ENCODE measurements at regions of chr11 and their contacts with region 1.

Region 1: GRCh38 chr11:46529095-46529905 is 64.5 kb downstream of the AMBRA1 start:
- DNase-seq: peak; percentile 63
- H3K4me3 ChIP-seq: no peak overlapping the region
- H3K27ac ChIP-seq: no peak overlapping the region
- H3K4me1 ChIP-seq: no peaks in the 10 kb centered on the region
- H3K27me3 ChIP-seq: no peaks in the 10 kb centered on the region
- CTCF ChIP-seq: peak; percentile 90 to 95
- POLR2A ChIP-seq: no peak

Region 2: DNA sequence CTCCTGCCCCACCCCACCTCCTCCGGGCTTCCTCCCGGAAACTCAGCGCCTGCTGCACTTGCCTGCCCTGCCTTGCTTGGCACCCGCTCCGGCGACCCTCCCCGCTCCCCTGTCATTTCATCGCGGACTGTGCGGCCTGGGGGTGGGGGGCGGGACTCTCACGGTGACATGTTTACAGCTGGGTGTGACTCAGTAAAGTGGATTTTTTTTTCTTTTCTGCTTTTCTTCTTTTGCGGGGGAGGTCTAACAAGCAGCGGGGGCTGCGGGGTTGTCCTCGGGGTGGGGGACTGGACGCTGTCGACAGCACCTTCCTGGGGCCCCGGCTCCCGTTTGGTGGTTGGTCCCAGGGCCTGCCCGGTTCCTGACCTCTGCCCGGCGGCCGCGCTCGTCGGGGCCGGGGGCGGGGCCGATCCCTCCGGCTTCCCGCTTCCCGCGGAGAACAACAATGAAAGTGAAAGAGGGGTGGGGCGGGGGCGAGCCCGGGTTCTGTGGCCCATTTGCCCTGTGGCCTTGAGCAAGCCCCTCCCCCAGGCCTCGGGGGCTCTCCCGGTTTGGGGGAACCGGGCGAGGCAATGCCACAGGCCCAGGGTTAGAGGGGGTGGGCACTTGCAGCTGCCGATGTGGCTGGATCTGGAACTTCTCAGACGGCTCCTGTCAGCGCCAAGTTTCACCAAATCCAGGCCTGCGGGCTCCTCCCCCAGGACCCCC is 148.8 kb before region 1 on chr11:
- CTCF ChIA-PET with region 1: interaction called, 15 read pairs
- POLR2A ChIA-PET with region 1: no interaction called
- dilution Hi-C with region 1: no loop called
- intact Hi-C with region 1: no loop called
- DNase-seq: peak; percentile 67
- H3K4me3 ChIP-seq: peak overlapping the region; percentile 62 to 84 (median 72)
- H3K27ac ChIP-seq: peak overlapping the region; percentile 61
- H3K4me1 ChIP-seq: peaks cover 11% of the 10 kb centered on the region
- H3K27me3 ChIP-seq: no peaks in the 10 kb centered on the region
- CTCF ChIP-seq: no peak
- POLR2A ChIP-seq: no peak

Region 3: DNA sequence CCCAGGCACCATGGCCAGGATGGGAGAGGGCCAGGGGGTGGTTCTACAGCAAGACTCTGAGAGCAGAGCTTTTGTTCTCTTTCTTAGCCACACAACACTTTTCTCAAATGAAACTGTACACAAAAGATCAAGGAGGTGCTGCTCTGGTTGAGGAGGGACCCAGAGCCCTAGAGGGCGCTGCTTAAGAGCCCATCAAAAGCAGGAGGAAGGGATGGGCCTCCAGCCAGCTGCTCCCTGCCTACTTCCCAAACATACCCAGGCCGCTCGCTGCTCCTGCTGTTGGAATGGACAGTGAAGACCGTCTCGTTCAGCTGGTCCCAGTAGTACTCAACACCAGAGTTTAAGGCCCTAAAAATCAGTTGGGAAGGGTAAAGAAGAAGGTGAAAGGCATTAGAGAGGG is 119.3 kb before region 1 on chr11:
- CTCF ChIA-PET with region 1: interaction called, 11 read pairs
- POLR2A ChIA-PET with region 1: no interaction called
- dilution Hi-C with region 1: no loop called
- intact Hi-C with region 1: no loop called
- DNase-seq: no peak
- H3K4me3 ChIP-seq: no peak overlapping the region
- H3K27ac ChIP-seq: no peak overlapping the region
- H3K4me1 ChIP-seq: no peaks in the 10 kb centered on the region
- H3K27me3 ChIP-seq: no peaks in the 10 kb centered on the region
- CTCF ChIP-seq: peak in 1 of 2 donors; percentile 8
- POLR2A ChIP-seq: no peak

Region 4: DNA sequence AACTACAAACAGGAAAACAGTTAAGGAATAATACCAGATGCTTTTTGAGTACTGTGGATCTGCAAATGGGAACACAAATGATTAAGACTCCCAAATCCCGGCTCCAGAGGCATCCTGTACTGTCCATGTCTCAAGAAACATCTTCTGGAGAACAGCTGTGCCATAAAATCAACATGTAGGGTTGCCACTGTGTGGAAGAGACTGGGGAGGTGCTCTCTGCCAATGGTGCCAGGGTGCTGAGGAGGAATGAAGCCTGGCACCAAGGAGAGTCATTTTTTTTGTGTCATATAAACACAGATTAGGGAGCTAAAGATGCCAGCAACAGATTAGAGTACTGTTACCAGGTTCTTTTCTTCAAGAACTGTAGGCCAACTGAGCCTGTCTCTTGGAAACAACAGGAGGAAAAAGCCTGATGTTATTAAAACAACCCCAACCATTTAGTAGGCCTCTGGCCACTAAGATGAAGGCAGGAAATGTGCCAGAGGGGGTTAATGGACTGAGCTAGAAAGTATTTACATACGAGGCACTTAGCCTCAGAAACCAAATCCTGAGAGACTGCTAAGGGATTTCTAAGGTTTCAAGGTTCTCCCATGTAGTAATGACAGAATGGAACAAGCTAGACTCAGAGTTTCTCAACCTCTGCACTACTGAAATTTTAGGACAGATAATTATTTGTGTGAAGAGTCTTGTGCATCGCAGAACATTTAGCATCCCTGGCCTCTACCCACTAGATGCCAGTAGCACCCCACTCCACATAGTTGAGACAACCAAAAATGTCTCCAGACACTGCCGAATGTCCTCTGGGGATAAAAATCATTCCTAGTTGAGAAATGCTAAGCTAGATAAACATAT is 83.2 kb before region 1 on chr11:
- CTCF ChIA-PET with region 1: interaction called, 10 read pairs
- POLR2A ChIA-PET with region 1: no interaction called
- dilution Hi-C with region 1: no loop called
- intact Hi-C with region 1: no loop called
- DNase-seq: peak; percentile 37
- H3K4me3 ChIP-seq: no peak overlapping the region
- H3K27ac ChIP-seq: no peak overlapping the region
- H3K4me1 ChIP-seq: no peaks in the 10 kb centered on the region
- H3K27me3 ChIP-seq: no peaks in the 10 kb centered on the region
- CTCF ChIP-seq: no peak
- POLR2A ChIP-seq: no peak

Region 5: GRCh38 chr11:46489661-46490560 is 39.4 kb before region 1 on chr11:
- CTCF ChIA-PET with region 1: interaction called, 171 read pairs
- POLR2A ChIA-PET with region 1: no interaction called
- dilution Hi-C with region 1: no loop called
- intact Hi-C with region 1: loop called (anchors 1 kb)
- DNase-seq: peak; percentile 62
- H3K4me3 ChIP-seq: no peak overlapping the region
- H3K27ac ChIP-seq: no peak overlapping the region
- H3K4me1 ChIP-seq: peaks cover 27% of the 10 kb centered on the region
- H3K27me3 ChIP-seq: no peaks in the 10 kb centered on the region
- CTCF ChIP-seq: peak; percentile 66 to 68
- POLR2A ChIP-seq: no peak

Region 6: GRCh38 chr11:46504817-46505613 is 24.3 kb before region 1 on chr11:
- CTCF ChIA-PET with region 1: interaction called, 24 read pairs
- POLR2A ChIA-PET with region 1: no interaction called
- dilution Hi-C with region 1: no loop called
- intact Hi-C with region 1: no loop called
- DNase-seq: peak; percentile 29
- H3K4me3 ChIP-seq: no peak overlapping the region
- H3K27ac ChIP-seq: no peak overlapping the region
- H3K4me1 ChIP-seq: no peaks in the 10 kb centered on the region
- H3K27me3 ChIP-seq: no peaks in the 10 kb centered on the region
- CTCF ChIP-seq: no peak
- POLR2A ChIP-seq: no peak

Region 7: DNA sequence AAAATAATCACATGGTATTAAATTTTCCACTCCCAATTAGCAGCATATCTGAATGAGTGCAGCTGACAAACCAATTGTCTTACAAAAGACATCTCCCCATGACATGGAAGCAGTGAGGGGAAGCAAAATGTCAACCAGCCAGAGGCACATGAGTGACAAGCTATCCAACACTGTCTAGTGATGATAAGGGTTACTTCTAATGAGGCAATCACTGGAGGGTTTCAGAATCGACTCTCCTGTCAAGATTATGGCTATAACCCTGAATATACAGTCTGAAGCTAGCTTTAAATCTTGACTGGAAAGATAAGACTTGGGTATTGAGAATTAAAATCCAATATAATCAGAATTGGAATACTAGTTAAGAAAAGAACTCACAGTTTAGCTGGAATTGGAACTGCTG is 14.3 kb after region 1 on chr11:
- CTCF ChIA-PET with region 1: interaction called, 16 read pairs
- POLR2A ChIA-PET with region 1: no interaction called
- dilution Hi-C with region 1: no loop called
- intact Hi-C with region 1: no loop called
- DNase-seq: no peak
- H3K4me3 ChIP-seq: no peak overlapping the region
- H3K27ac ChIP-seq: no peak overlapping the region
- H3K4me1 ChIP-seq: no peaks in the 10 kb centered on the region
- H3K27me3 ChIP-seq: no peaks in the 10 kb centered on the region
- CTCF ChIP-seq: no peak
- POLR2A ChIP-seq: no peak

Region 8: GRCh38 chr11:46570790-46571398 is 41.6 kb after region 1 on chr11:
- CTCF ChIA-PET with region 1: no interaction called
- POLR2A ChIA-PET with region 1: no interaction called
- dilution Hi-C with region 1: no loop called
- intact Hi-C with region 1: no loop called
- DNase-seq: no peak
- H3K4me3 ChIP-seq: no peak overlapping the region
- H3K27ac ChIP-seq: no peak overlapping the region
- H3K4me1 ChIP-seq: no peaks in the 10 kb centered on the region
- H3K27me3 ChIP-seq: no peaks in the 10 kb centered on the region
- CTCF ChIP-seq: no peak
- POLR2A ChIP-seq: no peak

Region 9: DNA sequence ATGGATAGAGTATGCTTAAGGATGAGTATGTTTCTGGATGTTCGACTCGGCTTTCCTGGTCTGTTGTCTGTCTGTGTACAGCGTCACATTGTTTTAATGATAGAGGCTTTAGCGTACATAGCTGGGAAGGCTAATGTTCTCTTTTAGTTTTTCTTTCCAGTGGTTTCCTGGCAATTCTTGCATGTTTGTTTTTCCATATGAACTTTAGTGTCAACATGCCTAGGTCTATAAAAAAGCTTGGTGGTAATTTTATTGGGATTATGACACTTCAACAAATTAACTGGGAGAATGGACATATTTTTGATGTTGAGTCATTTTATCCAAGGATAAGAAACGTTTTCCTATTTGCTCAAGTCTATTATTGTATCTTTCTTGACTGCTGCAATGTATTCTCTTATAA is 207.3 kb after region 1 on chr11:
- CTCF ChIA-PET with region 1: no interaction called
- POLR2A ChIA-PET with region 1: no interaction called
- dilution Hi-C with region 1: no loop called
- intact Hi-C with region 1: no loop called
- DNase-seq: peak; percentile 84
- H3K4me3 ChIP-seq: no peak overlapping the region
- H3K27ac ChIP-seq: no peak overlapping the region
- H3K4me1 ChIP-seq: peaks cover 4% of the 10 kb centered on the region
- H3K27me3 ChIP-seq: no peaks in the 10 kb centered on the region
- CTCF ChIP-seq: no peak
- POLR2A ChIP-seq: no peak

Measured in endothelial cell of umbilical vein (primary cell).